ENCODE measurements at regions of chr22 and their contacts with region 1.

Region 1: GRCh38 chr22:38272373-38273134 is at the start of gene TMEM184B:
- DNase-seq: peak; percentile 83
- ATAC-seq: peak; percentile 95 to 98
- total RNA-seq, gene TMEM184B: 47.2 to 60.3 TPM

Region 2: GRCh38 chr22:38317122-38317994 is 44.8 kb after region 1 on chr22 and contains the start of gene CSNK1E:
- intact Hi-C with region 1: loop called in 1 of 2 experiments (anchors 5 kb)
- DNase-seq: peak; percentile 87
- ATAC-seq: peak; percentile 75 to 79
- total RNA-seq, gene CSNK1E: 69.2 to 90.5 TPM

Measured in left cardiac atrium (tissue), 4 donors.